OCI-LY7 (cell line): ENCODE measurements at regions of chr10 and their contacts with region 1.

Region 1: DNA sequence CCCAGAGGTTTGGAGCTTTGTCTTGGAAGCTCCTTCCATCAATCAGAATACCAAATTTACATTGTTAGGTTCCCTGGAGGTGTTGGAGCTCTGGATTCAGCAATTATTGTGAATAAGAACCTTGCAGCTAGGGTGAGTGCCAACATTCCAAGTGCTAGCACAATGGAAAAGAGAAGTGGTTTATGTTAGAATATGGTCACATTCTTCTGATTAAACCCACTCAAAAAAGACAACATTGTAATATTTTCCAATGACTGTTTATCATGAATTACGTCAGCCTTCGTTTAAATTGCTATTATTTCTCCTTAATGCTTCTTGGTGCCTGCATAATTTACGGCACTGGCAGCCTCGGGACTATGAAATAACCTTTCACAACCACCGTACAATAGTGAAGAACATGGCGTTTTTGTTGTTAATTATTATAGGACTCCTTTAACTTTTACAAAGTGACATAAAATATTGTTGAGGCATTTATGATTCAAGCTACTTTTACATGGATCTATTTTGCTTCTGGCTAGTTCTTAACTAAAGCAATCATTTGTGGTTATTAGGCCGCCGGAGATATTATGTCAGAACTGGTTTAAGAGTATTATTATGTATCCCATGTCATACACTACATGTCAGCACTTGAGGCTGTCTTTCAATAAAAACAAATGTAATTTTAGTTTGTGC is 117.7 kb downstream of the ARID5B start:
- DNase-seq: no peak
- H3K4me3 ChIP-seq: peak overlapping the region; percentile 21
- H3K27ac ChIP-seq: peak overlapping the region; percentile 43
- H3K4me1 ChIP-seq: peaks cover 76% of the 10 kb centered on the region
- CTCF ChIP-seq: no peak

Region 2: GRCh38 chr10:61793760-61794703 is 225.1 kb before region 1 on chr10:
- CTCF ChIA-PET with region 1: no interaction called
- POLR2A ChIA-PET with region 1: no interaction called
- intact Hi-C with region 1: no loop called
- DNase-seq: no peak
- H3K4me3 ChIP-seq: no peak overlapping the region
- H3K27ac ChIP-seq: no peak overlapping the region
- H3K4me1 ChIP-seq: no peaks in the 10 kb centered on the region
- CTCF ChIP-seq: no peak

Region 3: GRCh38 chr10:62005281-62005680 is 13.9 kb before region 1 on chr10:
- CTCF ChIA-PET with region 1: interaction called, 4 read pairs
- POLR2A ChIA-PET with region 1: interaction called, 53 read pairs
- intact Hi-C with region 1: no loop called
- DNase-seq: no peak
- H3K4me3 ChIP-seq: no peak overlapping the region
- H3K27ac ChIP-seq: no peak overlapping the region
- H3K4me1 ChIP-seq: peaks cover 66% of the 10 kb centered on the region
- CTCF ChIP-seq: no peak

Region 4: DNA sequence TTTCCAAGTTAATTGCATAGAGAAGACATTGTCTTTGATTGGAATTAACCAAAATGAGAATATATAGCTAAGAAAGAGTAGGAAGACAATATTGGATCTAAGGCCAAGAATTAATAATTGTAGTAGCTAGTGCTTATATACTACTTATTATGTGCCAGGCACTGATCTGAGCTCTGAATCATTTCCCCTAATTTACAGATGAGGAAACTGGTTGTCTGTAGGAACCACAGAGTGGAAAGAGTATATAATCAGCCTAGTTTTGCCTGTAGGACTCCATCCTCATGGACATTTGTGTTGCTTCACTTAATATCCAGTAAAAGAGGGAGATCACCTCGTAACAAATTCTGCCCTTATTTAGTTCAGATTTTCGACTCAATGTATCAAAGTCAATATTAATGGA is 10.3 kb after region 1 on chr10:
- CTCF ChIA-PET with region 1: interaction called, 4 read pairs
- POLR2A ChIA-PET with region 1: interaction called, 139 read pairs
- intact Hi-C with region 1: no loop called
- DNase-seq: no peak
- H3K4me3 ChIP-seq: no peak overlapping the region
- H3K27ac ChIP-seq: no peak overlapping the region
- H3K4me1 ChIP-seq: peaks cover 28% of the 10 kb centered on the region
- CTCF ChIP-seq: no peak

Region 5: DNA sequence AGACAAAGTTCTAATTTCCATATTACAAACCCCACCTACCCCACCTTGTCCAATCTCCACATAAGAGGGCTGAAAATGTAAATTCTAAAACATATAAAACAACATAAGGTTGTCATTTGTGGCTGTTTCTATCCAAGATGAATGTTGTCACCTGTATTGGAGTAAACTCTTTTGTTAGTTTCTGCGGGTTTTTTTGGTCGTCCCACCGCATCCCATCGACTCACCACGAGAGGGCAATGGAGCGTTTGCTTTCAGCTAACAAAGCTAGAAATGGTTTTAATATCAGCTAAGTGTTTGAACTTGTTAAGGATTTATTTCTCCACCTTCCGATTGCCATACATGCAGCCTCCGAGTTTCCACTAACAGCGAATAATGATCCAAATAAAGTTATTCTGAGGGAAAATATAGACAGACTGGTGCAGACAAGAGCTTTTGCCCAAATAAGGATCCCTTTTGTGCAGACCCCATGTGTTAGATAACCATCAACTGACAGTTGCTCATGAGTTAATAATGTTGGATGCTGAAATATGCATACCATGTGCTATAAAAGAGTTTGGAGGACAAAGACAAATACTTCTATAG is 19.6 kb after region 1 on chr10:
- CTCF ChIA-PET with region 1: no interaction called
- POLR2A ChIA-PET with region 1: interaction called, 139 read pairs
- intact Hi-C with region 1: no loop called
- DNase-seq: peak; percentile 85
- H3K4me3 ChIP-seq: peak overlapping the region; percentile 18
- H3K27ac ChIP-seq: peak overlapping the region; percentile 56
- H3K4me1 ChIP-seq: peaks cover 80% of the 10 kb centered on the region
- CTCF ChIP-seq: peak; percentile 98

Region 6: DNA sequence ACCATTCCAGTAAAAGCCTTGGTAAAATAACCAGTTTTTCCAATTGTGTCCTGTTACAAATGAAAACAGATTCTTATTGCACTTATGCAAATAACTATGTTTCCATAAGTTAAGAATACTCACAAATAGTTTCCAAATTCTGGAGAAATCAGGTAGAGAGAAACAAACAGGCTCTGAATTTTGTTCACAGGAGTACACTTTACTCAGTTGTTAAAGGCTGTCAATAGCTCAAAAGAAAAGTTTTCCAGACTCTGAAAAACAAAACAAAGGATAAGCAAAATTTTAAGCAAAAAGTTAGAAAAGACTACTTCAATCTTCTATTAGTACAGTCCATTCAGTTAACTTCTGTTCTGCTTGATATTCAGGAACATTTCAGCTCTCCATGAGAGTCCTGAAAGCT is 322.3 kb after region 1 on chr10:
- CTCF ChIA-PET with region 1: no interaction called
- POLR2A ChIA-PET with region 1: no interaction called
- intact Hi-C with region 1: no loop called
- DNase-seq: no peak
- H3K4me3 ChIP-seq: no peak overlapping the region
- H3K27ac ChIP-seq: no peak overlapping the region
- H3K4me1 ChIP-seq: no peaks in the 10 kb centered on the region
- CTCF ChIP-seq: no peak

Region 7: GRCh38 chr10:62414359-62414758 is 395.2 kb after region 1 on chr10:
- CTCF ChIA-PET with region 1: no interaction called
- POLR2A ChIA-PET with region 1: no interaction called
- intact Hi-C with region 1: no loop called
- DNase-seq: no peak
- H3K4me3 ChIP-seq: no peak overlapping the region
- H3K27ac ChIP-seq: no peak overlapping the region
- H3K4me1 ChIP-seq: no peaks in the 10 kb centered on the region
- CTCF ChIP-seq: no peak